Panc1 (cell line): ENCODE measurements at regions of chr7 and their contacts with region 1.

Region 1: GRCh38 chr7:56105508-56105907 is 768 bp downstream of the CHCHD2 start:
- DNase-seq: peak; percentile 46
- ATAC-seq: peak; percentile 46; the same call in 1 of the 2 replicates
- H3K4me3 ChIP-seq: peak overlapping the region; percentile 55 to 98
- H3K27ac ChIP-seq: peak overlapping the region; percentile 98
- H3K4me1 ChIP-seq: peaks cover 6% of the 10 kb centered on the region; the same call in 1 of the 2 replicates
- H3K27me3 ChIP-seq: no peaks in the 10 kb centered on the region
- CTCF ChIP-seq: no peak

Region 2: GRCh38 chr7:55192718-55193117 is 912.8 kb before region 1 on chr7:
- CTCF ChIA-PET with region 1: no interaction called
- POLR2A ChIA-PET with region 1: no interaction called
- in situ Hi-C with region 1: no loop called
- intact Hi-C with region 1: no loop called
- DNase-seq: no peak
- ATAC-seq: 0 out of 2 replicates have a peak, but pooled peaks have one; percentile 16
- H3K4me3 ChIP-seq: no peak overlapping the region
- H3K27ac ChIP-seq: no peak overlapping the region
- H3K4me1 ChIP-seq: no peaks in the 10 kb centered on the region
- H3K27me3 ChIP-seq: no peaks in the 10 kb centered on the region
- CTCF ChIP-seq: no peak

Region 3: DNA sequence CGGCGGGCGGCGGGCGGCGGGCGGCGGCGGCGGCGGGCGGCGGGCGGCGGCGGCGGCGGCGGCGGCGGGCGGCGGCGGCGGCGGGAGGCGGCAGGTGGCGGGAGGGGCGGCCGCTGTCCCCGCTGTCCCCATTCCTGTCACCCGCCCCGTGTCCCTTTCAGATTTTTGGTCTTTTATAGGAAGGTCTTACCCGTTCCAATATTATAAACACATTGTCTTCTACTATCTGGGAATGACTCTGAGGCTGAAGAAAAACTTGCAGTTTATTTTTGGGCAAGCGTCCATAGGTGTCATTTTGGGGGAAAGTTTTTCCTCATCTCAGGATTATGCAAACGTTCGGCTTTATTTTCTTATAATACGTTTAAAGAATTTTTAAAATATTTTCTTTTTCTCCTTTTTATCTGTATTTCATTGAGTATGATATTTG is 217.7 kb before region 1 on chr7:
- CTCF ChIA-PET with region 1: no interaction called
- POLR2A ChIA-PET with region 1: no interaction called
- in situ Hi-C with region 1: no loop called
- intact Hi-C with region 1: no loop called
- DNase-seq: no peak
- ATAC-seq: no peak
- H3K4me3 ChIP-seq: peak overlapping the region; percentile 55 to 61
- H3K27ac ChIP-seq: peak overlapping the region; percentile 84
- H3K4me1 ChIP-seq: 0 out of 2 replicates have a peak, but pooled peaks cover 3% of the 10 kb centered on the region
- H3K27me3 ChIP-seq: no peaks in the 10 kb centered on the region
- CTCF ChIP-seq: no peak

Region 4: GRCh38 chr7:55977831-55978230 is 127.7 kb before region 1 on chr7:
- CTCF ChIA-PET with region 1: no interaction called
- POLR2A ChIA-PET with region 1: interaction called, 10 read pairs
- in situ Hi-C with region 1: no loop called
- intact Hi-C with region 1: no loop called
- DNase-seq: no peak
- ATAC-seq: no peak
- H3K4me3 ChIP-seq: no peak overlapping the region
- H3K27ac ChIP-seq: no peak overlapping the region
- H3K4me1 ChIP-seq: no peaks in the 10 kb centered on the region
- H3K27me3 ChIP-seq: no peaks in the 10 kb centered on the region
- CTCF ChIP-seq: no peak

Region 5: GRCh38 chr7:56447864-56448693 is 342.6 kb after region 1 on chr7:
- CTCF ChIA-PET with region 1: no interaction called
- POLR2A ChIA-PET with region 1: no interaction called
- in situ Hi-C with region 1: no loop called
- intact Hi-C with region 1: no loop called
- DNase-seq: no peak
- ATAC-seq: no peak
- H3K4me3 ChIP-seq: no peak overlapping the region
- H3K27ac ChIP-seq: no peak overlapping the region
- H3K4me1 ChIP-seq: no peaks in the 10 kb centered on the region
- H3K27me3 ChIP-seq: no peaks in the 10 kb centered on the region
- CTCF ChIP-seq: no peak